ENCODE measurements at regions of chr12 and their contacts with region 1.

Region 1: GRCh38 chr12:14845350-14845750 is 2.0 kb upstream of the ART4 start:
- DNase-seq: peak; percentile 72
- ATAC-seq: peak; percentile 81
- H3K4me3 ChIP-seq: no peak overlapping the region
- H3K4me3 Mint-ChIP-seq: no peak overlapping the region
- H3K27ac ChIP-seq: no peak overlapping the region
- H3K27ac Mint-ChIP-seq: no peak overlapping the region
- H3K4me1 ChIP-seq: peaks cover 0 to 4% of the 10 kb centered on the region in 2 donors
- H3K4me1 Mint-ChIP-seq: peaks cover 9% of the 10 kb centered on the region
- H3K27me3 ChIP-seq: no peaks in the 10 kb centered on the region
- H3K27me3 Mint-ChIP-seq: no peaks in the 10 kb centered on the region
- CTCF ChIP-seq: peak; percentile 77

Region 2: GRCh38 chr12:14723763-14724162 is 121.6 kb before region 1 on chr12:
- CTCF ChIA-PET with region 1: interaction called, 3 read pairs
- POLR2A ChIA-PET with region 1: no interaction called
- intact Hi-C with region 1: loop called (anchors 5 kb)
- DNase-seq: peak; percentile 65
- ATAC-seq: peak; percentile 56
- H3K4me3 ChIP-seq: no peak overlapping the region
- H3K4me3 Mint-ChIP-seq: no peak overlapping the region
- H3K27ac ChIP-seq: no peak overlapping the region
- H3K27ac Mint-ChIP-seq: no peak overlapping the region
- H3K4me1 ChIP-seq: no peaks in the 10 kb centered on the region
- H3K4me1 Mint-ChIP-seq: no peaks in the 10 kb centered on the region
- H3K27me3 ChIP-seq: no peaks in the 10 kb centered on the region
- H3K27me3 Mint-ChIP-seq: peaks cover 13% of the 10 kb centered on the region
- CTCF ChIP-seq: peak; percentile 79

Region 3: GRCh38 chr12:14937689-14938088 is 92.3 kb after region 1 on chr12:
- CTCF ChIA-PET with region 1: interaction called, 10 read pairs
- POLR2A ChIA-PET with region 1: no interaction called
- intact Hi-C with region 1: no loop called
- DNase-seq: no peak
- ATAC-seq: peak; percentile 39
- H3K4me3 ChIP-seq: no peak overlapping the region
- H3K4me3 Mint-ChIP-seq: no peak overlapping the region
- H3K27ac ChIP-seq: peak overlapping the region in 1 of 2 donors; percentile 14
- H3K27ac Mint-ChIP-seq: peak overlapping the region; percentile 63
- H3K4me1 ChIP-seq: peaks cover 11 to 19% of the 10 kb centered on the region in 2 donors
- H3K4me1 Mint-ChIP-seq: peaks cover 28% of the 10 kb centered on the region
- H3K27me3 ChIP-seq: no peaks in the 10 kb centered on the region
- H3K27me3 Mint-ChIP-seq: no peaks in the 10 kb centered on the region
- CTCF ChIP-seq: peak; percentile 29

Region 4: GRCh38 chr12:14989790-14990189 is 144.4 kb after region 1 on chr12:
- CTCF ChIA-PET with region 1: interaction called, 192 read pairs
- POLR2A ChIA-PET with region 1: interaction called, 12 read pairs
- intact Hi-C with region 1: no loop called
- DNase-seq: peak; percentile 62
- ATAC-seq: peak; percentile 65
- H3K4me3 ChIP-seq: peak overlapping the region in 1 of 5 experiments; percentile 13
- H3K4me3 Mint-ChIP-seq: peak overlapping the region; percentile 79
- H3K27ac ChIP-seq: peak overlapping the region; percentile 47 to 67
- H3K27ac Mint-ChIP-seq: peak overlapping the region; percentile 88
- H3K4me1 ChIP-seq: peaks cover 44 to 51% of the 10 kb centered on the region in 2 donors
- H3K4me1 Mint-ChIP-seq: peaks cover 68% of the 10 kb centered on the region
- H3K27me3 ChIP-seq: no peaks in the 10 kb centered on the region
- H3K27me3 Mint-ChIP-seq: no peaks in the 10 kb centered on the region
- CTCF ChIP-seq: no peak

Region 5: GRCh38 chr12:15220994-15221885 is 375.9 kb after region 1 on chr12 and contains the start of gene RERG:
- CTCF ChIA-PET with region 1: interaction called, 6 read pairs
- POLR2A ChIA-PET with region 1: no interaction called
- intact Hi-C with region 1: loop called (anchors 1 kb)
- DNase-seq: peak; percentile 77
- ATAC-seq: peak; percentile 98
- H3K4me3 ChIP-seq: peak within 1 kb of the TSS in 4 of 5 experiments; percentile 29 to 49 (median 41)
- H3K4me3 Mint-ChIP-seq: peak within 1 kb of the TSS; percentile 79
- H3K27ac ChIP-seq: no peak within 1 kb of the TSS
- H3K27ac Mint-ChIP-seq: no peak within 1 kb of the TSS
- H3K4me1 ChIP-seq: peaks cover 11 to 16% of the 10 kb centered on the region in 2 donors
- H3K4me1 Mint-ChIP-seq: peaks cover 14% of the 10 kb centered on the region
- H3K27me3 ChIP-seq: peaks cover 0 to 39% (median 34%) of the 10 kb centered on the region in 4 experiments
- H3K27me3 Mint-ChIP-seq: peaks cover 44% of the 10 kb centered on the region
- CTCF ChIP-seq: peak; percentile 95
- total RNA-seq, gene RERG: not detected in 2 replicates

Measured in B cell (primary cell).